ENCODE measurements at regions of chr4 and their contacts with region 1.

Region 1: DNA sequence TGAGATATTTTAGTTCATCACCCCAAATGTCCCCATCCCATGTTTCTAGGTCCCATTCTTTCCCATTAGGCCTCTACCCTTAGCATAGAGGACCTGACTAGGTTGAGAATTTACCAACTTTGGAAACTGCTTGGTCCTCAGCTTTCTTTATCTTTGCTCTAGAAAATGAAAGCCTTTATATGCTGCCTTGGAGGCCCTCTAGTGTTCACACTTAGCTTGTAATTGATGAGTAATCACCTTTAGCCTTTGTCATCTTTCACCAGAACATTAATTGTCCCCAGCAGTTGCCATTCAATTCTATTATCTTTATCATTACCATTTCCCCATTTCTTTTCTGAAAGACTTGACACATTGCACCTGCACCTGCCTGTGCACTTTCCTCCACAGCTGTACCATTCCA is 589.2 kb upstream of the NR3C2 start:
- DNase-seq: no peak
- H3K4me3 ChIP-seq: no peak overlapping the region
- H3K27ac ChIP-seq: no peak overlapping the region
- H3K4me1 ChIP-seq: peaks cover 0 to 4% (median 1%) of the 10 kb centered on the region in 4 donors
- H3K27me3 ChIP-seq: no peaks in the 10 kb centered on the region
- CTCF ChIP-seq: peak; percentile 37 to 64 (median 49)
- EP300 ChIP-seq: no peak
- POLR2A ChIP-seq: no peak

Region 2: GRCh38 chr4:148934926-148935578 is 96.3 kb before region 1 on chr4:
- in situ Hi-C with region 1: no loop called
- intact Hi-C with region 1: no loop called
- DNase-seq: no peak
- H3K4me3 ChIP-seq: no peak overlapping the region
- H3K27ac ChIP-seq: no peak overlapping the region
- H3K4me1 ChIP-seq: no peaks in the 10 kb centered on the region
- H3K27me3 ChIP-seq: no peaks in the 10 kb centered on the region
- CTCF ChIP-seq: no peak
- EP300 ChIP-seq: no peak
- POLR2A ChIP-seq: no peak

Region 3: GRCh38 chr4:148999924-149000323 is 31.5 kb before region 1 on chr4:
- in situ Hi-C with region 1: no loop called
- intact Hi-C with region 1: loop called (anchors 5 kb)
- DNase-seq: no peak
- H3K4me3 ChIP-seq: no peak overlapping the region
- H3K27ac ChIP-seq: no peak overlapping the region
- H3K4me1 ChIP-seq: no peaks in the 10 kb centered on the region
- H3K27me3 ChIP-seq: no peaks in the 10 kb centered on the region
- CTCF ChIP-seq: no peak
- EP300 ChIP-seq: no peak
- POLR2A ChIP-seq: no peak

Region 4: GRCh38 chr4:149065753-149066152 is 34.4 kb after region 1 on chr4:
- in situ Hi-C with region 1: no loop called
- intact Hi-C with region 1: no loop called
- DNase-seq: no peak
- H3K4me3 ChIP-seq: no peak overlapping the region
- H3K27ac ChIP-seq: no peak overlapping the region
- H3K4me1 ChIP-seq: no peaks in the 10 kb centered on the region
- H3K27me3 ChIP-seq: no peaks in the 10 kb centered on the region
- CTCF ChIP-seq: no peak
- EP300 ChIP-seq: no peak
- POLR2A ChIP-seq: no peak

Region 5: DNA sequence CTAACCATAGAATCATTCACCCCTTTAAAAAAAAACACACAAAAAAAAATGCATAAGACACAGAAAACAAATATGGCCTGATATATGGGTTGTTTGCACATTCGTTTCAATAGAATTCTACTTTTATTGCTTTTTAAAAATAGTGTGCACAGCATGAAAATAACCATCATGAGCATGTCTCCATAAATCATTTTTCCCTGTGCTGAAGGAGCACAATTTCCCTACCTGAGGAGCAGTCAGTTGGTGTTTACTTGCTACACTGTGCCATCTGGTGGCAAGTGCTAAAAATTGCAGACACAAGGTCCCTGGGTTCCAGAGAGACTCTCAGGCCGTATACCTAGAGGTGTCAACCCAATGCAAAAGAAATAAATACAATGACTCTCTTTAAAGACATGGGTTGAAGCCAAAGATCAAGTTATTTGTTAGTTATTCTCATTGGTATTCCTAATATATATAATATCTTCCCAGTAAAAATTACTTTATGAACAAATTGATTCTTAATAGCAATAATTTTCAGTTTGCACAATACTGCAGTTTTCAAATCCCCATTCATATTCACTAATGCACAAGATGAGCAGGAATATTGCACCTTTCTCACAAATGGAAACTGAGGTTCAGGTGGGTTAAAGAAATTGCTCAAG is 232.8 kb after region 1 on chr4:
- in situ Hi-C with region 1: no loop called
- intact Hi-C with region 1: no loop called
- DNase-seq: peak; percentile 30
- H3K4me3 ChIP-seq: no peak overlapping the region
- H3K27ac ChIP-seq: no peak overlapping the region
- H3K4me1 ChIP-seq: no peaks in the 10 kb centered on the region
- H3K27me3 ChIP-seq: no peaks in the 10 kb centered on the region
- CTCF ChIP-seq: peak; percentile 36 to 74 (median 60)
- EP300 ChIP-seq: no peak
- POLR2A ChIP-seq: no peak

Measured in transverse colon (tissue), 4 donors.